ENCODE measurements at regions of chr15 and their contacts with region 1.

Region 1: GRCh38 chr15:79380755-79381497 is 51.2 kb upstream of the MINAR1 start:
- DNase-seq: peak; percentile 53 to 82 (median 70)
- ATAC-seq: peak; percentile 61 to 88 (median 80)
- H3K4me3 ChIP-seq: no peak overlapping the region
- H3K27ac ChIP-seq: no peak overlapping the region
- H3K4me1 ChIP-seq: no peaks in the 10 kb centered on the region
- H3K27me3 ChIP-seq: no peaks in the 10 kb centered on the region
- CTCF ChIP-seq: peak; percentile 75 to 93 (median 87)
- POLR2A ChIP-seq: no peak

Region 2: GRCh38 chr15:79475306-79475705 is 94.4 kb after region 1 on chr15:
- intact Hi-C with region 1: no loop called
- DNase-seq: no peak
- ATAC-seq: no peak
- H3K4me3 ChIP-seq: no peak overlapping the region
- H3K27ac ChIP-seq: no peak overlapping the region
- H3K4me1 ChIP-seq: no peaks in the 10 kb centered on the region
- H3K27me3 ChIP-seq: no peaks in the 10 kb centered on the region
- CTCF ChIP-seq: no peak
- POLR2A ChIP-seq: no peak

Region 3: GRCh38 chr15:79596051-79596507 is 215.2 kb after region 1 on chr15:
- intact Hi-C with region 1: loop called in 5 of 10 experiments (anchors 2 to 10 kb)
- DNase-seq: peak in 2 of 5 donors; percentile 9 to 38
- ATAC-seq: peak in 3 of 4 donors; percentile 65 to 84 (median 80)
- H3K4me3 ChIP-seq: no peak overlapping the region
- H3K27ac ChIP-seq: no peak overlapping the region
- H3K4me1 ChIP-seq: no peaks in the 10 kb centered on the region
- H3K27me3 ChIP-seq: peaks cover 0 to 9% (median 0%) of the 10 kb centered on the region in 9 donors
- CTCF ChIP-seq: peak; percentile 31 to 71 (median 51)
- POLR2A ChIP-seq: no peak

Region 4: GRCh38 chr15:79989682-79990081 is 608.8 kb after region 1 on chr15:
- intact Hi-C with region 1: loop called in 9 of 10 experiments (anchors 2 to 10 kb)
- DNase-seq: no peak
- ATAC-seq: no peak
- H3K4me3 ChIP-seq: no peak overlapping the region
- H3K27ac ChIP-seq: no peak overlapping the region
- H3K4me1 ChIP-seq: peaks cover 0 to 15% (median 0%) of the 10 kb centered on the region in 12 donors
- H3K27me3 ChIP-seq: no peaks in the 10 kb centered on the region
- CTCF ChIP-seq: no peak
- POLR2A ChIP-seq: no peak

Region 5: DNA sequence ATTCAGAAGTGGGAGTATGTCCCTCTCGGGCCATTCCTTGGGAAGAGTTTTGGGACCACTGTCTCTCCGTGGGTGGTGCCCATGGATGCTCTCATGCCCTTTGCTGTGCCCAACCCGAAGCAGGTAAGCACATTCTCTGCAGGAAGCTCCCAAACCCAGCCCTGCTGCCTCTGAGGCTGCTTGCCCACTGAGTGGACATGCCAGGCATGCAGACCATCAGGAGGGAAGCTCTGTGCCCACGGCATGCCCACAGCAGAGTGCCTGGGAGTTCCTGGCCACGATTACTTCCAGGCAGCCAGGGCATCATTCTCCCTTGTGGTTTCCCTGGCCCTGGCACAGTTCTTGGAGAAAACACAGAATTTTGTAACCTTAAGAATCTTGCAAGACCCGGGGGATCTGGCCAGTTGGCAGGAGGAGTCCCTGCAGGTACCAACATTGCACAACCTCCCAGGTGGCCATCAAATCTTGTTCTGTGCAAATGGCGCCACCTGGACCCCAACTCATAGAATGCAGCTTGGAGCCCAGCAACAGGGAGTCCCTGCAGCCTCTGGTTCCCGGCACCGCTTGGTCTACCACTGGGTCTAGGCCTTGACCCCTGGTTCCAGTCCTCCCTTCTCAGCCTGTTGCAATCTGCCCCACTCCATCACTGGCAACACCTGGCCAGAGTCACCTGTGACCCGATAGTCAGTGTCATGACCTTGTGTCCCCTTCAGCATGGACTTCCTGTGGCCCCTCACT is 792.3 kb after region 1 on chr15:
- intact Hi-C with region 1: loop called in 6 of 10 experiments (anchors 2 to 10 kb)
- DNase-seq: peak in 3 of 5 donors; percentile 48 to 52 (median 49)
- ATAC-seq: peak; percentile 42 to 77 (median 54)
- H3K4me3 ChIP-seq: no peak overlapping the region
- H3K27ac ChIP-seq: no peak overlapping the region
- H3K4me1 ChIP-seq: peaks cover 0 to 12% (median 0%) of the 10 kb centered on the region in 12 donors
- H3K27me3 ChIP-seq: no peaks in the 10 kb centered on the region
- CTCF ChIP-seq: peak; percentile 45 to 72 (median 62)
- POLR2A ChIP-seq: no peak